Gastrocnemius medialis (tissue), 4 donors: ENCODE measurements at regions of chr5 and their contacts with region 1.

Region 1: GRCh38 chr5:50667653-50668595 is 1.5 kb downstream of the PARP8 start:
- DNase-seq: peak in 1 of 2 donors; percentile 17
- ATAC-seq: no peak
- H3K4me3 ChIP-seq: peak overlapping the region; percentile 76 to 93 (median 84)
- H3K27ac ChIP-seq: peak overlapping the region; percentile 52 to 74 (median 65)
- H3K4me1 ChIP-seq: no peaks in the 10 kb centered on the region
- H3K27me3 ChIP-seq: peaks cover 3 to 8% (median 6%) of the 10 kb centered on the region in 3 donors
- CTCF ChIP-seq: no peak
- POLR2A ChIP-seq: no peak

Region 2: DNA sequence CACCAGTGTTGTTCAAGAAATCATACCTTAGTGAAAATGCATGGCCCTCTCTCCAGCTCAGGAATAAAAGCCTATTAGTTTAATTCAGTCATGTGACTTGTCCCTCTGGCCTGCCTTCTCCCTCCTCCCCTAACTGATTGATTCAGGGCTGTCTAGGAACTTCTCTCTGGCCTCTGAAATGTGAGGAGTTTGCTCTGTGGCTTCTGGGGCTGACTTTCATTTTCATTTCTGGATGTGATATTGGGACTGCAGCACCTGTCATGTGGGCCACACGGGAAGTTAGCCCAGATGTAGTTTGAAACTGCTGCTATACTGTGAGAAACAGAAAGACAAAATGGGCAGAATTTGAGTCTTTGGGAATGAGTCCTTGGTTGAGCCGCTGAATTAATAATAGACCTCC is 43.3 kb after region 1 on chr5:
- in situ Hi-C with region 1: no loop called
- intact Hi-C with region 1: no loop called
- DNase-seq: peak in 1 of 2 donors; percentile 12
- ATAC-seq: peak in 1 of 2 donors; percentile 55
- H3K4me3 ChIP-seq: peak overlapping the region in 2 of 4 donors; percentile 6 to 37
- H3K27ac ChIP-seq: no peak overlapping the region
- H3K4me1 ChIP-seq: no peaks in the 10 kb centered on the region
- H3K27me3 ChIP-seq: no peaks in the 10 kb centered on the region
- CTCF ChIP-seq: no peak
- POLR2A ChIP-seq: no peak

Region 3: DNA sequence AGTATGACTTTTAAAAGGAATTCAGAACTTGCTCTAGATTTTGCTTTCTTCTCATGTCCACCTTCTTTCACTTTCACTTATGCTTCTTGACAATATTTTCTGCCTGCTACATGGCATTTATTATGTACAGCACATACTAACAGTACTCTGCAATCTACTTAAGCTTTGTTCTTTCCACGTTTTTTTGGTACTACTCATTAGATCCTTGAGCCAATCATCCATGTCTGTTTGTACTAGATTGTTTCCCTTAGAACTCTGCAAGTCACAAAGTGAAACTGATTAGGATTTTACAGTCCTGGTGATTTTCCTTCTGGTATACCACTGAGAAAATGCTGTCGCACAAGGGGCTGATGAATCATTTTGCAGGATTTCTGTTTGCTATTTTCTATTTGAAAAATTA is 76.9 kb after region 1 on chr5:
- in situ Hi-C with region 1: no loop called
- intact Hi-C with region 1: loop called (anchors 5 kb)
- DNase-seq: no peak
- ATAC-seq: no peak
- H3K4me3 ChIP-seq: peak overlapping the region; percentile 1 to 29 (median 10)
- H3K27ac ChIP-seq: no peak overlapping the region
- H3K4me1 ChIP-seq: peaks cover 5 to 6% of the 10 kb centered on the region in 2 donors
- H3K27me3 ChIP-seq: no peaks in the 10 kb centered on the region
- CTCF ChIP-seq: no peak
- POLR2A ChIP-seq: no peak